SK-N-SH (cell line): ENCODE measurements at regions of chr9 and their contacts with region 1.

Region 1: GRCh38 chr9:127199001-127199791 is 65.4 kb upstream of the GARNL3 start:
- DNase-seq: peak; percentile 84
- H3K4me3 ChIP-seq: peak overlapping the region in 1 of 2 experiments; percentile 27; a peak in 1 of 4 replicates
- H3K27ac ChIP-seq: no peak overlapping the region
- H3K4me1 ChIP-seq: peaks cover 0 to 34% of the 10 kb centered on the region in 2 experiments; a peak in 2 of 4 replicates
- H3K27me3 ChIP-seq: no peaks in the 10 kb centered on the region
- CTCF ChIP-seq: peak; percentile 86
- EP300 ChIP-seq: no peak
- RAD21 ChIP-seq: peak; percentile 99

Region 2: GRCh38 chr9:126965541-126966428 is 233.4 kb before region 1 on chr9:
- CTCF ChIA-PET with region 1: interaction called, 118 read pairs
- POLR2A ChIA-PET with region 1: no interaction called
- DNase-seq: peak; percentile 73
- H3K4me3 ChIP-seq: no peak overlapping the region
- H3K27ac ChIP-seq: no peak overlapping the region
- H3K4me1 ChIP-seq: no peaks in the 10 kb centered on the region
- H3K27me3 ChIP-seq: no peaks in the 10 kb centered on the region
- CTCF ChIP-seq: peak; percentile 94
- EP300 ChIP-seq: no peak
- RAD21 ChIP-seq: peak; percentile 98

Region 3: DNA sequence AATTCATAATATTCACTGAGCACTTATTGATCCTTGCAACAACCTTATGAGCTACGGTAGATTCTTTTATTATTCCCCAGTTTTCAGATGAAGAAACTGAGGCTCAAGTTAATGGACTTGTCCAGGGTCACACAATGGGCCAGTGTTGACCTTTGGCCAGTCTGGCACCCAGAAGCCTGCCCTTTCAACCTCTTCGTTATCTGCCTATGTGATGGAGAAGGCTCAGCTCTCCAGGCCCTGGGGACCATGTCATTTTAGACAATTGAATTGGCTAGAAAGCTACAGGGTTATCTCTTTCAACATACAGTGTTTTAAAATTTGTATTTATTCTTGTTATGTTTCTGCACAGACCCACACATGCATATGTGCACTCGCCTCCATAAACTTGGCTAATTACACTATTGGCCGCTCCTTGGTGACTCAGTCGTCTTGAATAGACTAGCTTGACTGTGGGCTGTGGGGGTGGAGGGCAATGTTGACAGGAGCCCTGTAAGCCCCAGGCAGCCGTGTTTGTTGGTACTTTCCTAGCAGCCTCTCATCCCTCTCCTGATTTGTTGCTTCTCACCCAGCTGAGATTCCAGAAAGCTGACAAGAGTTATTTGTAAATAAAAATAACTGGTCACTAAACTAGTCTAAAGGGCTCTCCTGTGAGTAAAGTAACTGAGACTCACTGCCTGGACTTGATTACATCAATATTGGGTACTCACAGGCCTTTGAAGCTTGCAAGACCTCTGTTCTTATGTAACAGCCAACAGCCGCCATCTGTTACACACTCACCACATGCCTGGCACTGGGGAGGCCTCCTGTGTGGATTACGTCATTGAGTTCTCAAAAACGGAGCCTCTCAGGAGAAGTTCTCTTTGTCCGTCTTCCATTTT is 68.3 kb before region 1 on chr9:
- CTCF ChIA-PET with region 1: interaction called, 10 read pairs
- POLR2A ChIA-PET with region 1: no interaction called
- DNase-seq: peak; percentile 71
- H3K4me3 ChIP-seq: no peak overlapping the region
- H3K27ac ChIP-seq: peak overlapping the region in 1 of 2 experiments; percentile 58; a peak in 3 of 4 replicates
- H3K4me1 ChIP-seq: peaks cover 14 to 46% of the 10 kb centered on the region in 2 experiments; a peak in 3 of 4 replicates
- H3K27me3 ChIP-seq: no peaks in the 10 kb centered on the region
- CTCF ChIP-seq: no peak
- EP300 ChIP-seq: peak in 1 of 2 experiments; percentile 62; a peak in 1 of 4 replicates
- RAD21 ChIP-seq: no peak

Region 4: GRCh38 chr9:127178686-127179632 is 20.2 kb before region 1 on chr9:
- CTCF ChIA-PET with region 1: interaction called, 19 read pairs
- POLR2A ChIA-PET with region 1: no interaction called
- DNase-seq: no peak
- H3K4me3 ChIP-seq: no peak overlapping the region
- H3K27ac ChIP-seq: no peak overlapping the region
- H3K4me1 ChIP-seq: peaks cover 0 to 12% of the 10 kb centered on the region in 2 experiments; a peak in 1 of 4 replicates
- H3K27me3 ChIP-seq: no peaks in the 10 kb centered on the region
- CTCF ChIP-seq: no peak
- EP300 ChIP-seq: no peak
- RAD21 ChIP-seq: no peak

Region 5: DNA sequence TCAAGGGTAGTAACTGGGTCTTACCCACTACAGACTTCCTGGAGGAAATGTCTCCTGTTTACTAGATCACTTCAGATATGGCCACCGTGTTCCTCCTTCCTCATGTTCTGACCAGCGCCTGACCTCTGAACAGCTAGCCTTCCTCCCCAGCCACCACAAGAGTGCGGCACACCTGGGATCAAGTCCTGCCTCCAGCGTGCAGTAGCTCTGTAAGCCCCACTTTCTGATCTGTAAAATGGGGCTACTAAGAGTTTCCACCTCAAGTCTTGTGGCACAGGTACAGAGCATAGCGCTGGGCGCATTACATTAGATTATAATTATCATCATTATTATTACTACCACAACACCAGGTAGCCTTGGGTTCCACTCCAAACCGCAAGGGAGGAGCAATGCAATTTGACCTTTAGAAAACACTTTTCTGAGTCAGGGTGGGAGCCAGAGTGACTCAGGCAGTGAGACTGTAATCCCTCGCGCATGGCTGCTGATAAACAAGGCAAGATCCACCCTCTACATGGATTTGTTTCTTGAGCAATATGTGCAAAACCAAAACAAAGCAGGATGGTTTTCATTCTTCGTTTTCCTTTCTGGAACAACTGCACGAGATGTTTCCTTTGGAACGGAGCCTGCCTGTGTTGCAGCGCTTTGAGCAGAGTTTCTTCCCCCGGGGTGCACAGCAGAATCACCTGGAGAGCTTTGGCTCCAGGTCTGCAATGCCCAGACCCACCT is 11.8 kb before region 1 on chr9:
- CTCF ChIA-PET with region 1: interaction called, 23 read pairs
- POLR2A ChIA-PET with region 1: no interaction called
- DNase-seq: no peak
- H3K4me3 ChIP-seq: no peak overlapping the region
- H3K27ac ChIP-seq: peak overlapping the region; percentile 56 to 85; a peak in 2 of 4 replicates
- H3K4me1 ChIP-seq: peaks cover 21 to 22% of the 10 kb centered on the region in 2 experiments; a peak in 3 of 4 replicates
- H3K27me3 ChIP-seq: no peaks in the 10 kb centered on the region
- CTCF ChIP-seq: no peak
- EP300 ChIP-seq: no peak; a peak in 1 of 4 replicates
- RAD21 ChIP-seq: no peak

Region 6: GRCh38 chr9:127214421-127215267 is 15.4 kb after region 1 on chr9:
- CTCF ChIA-PET with region 1: interaction called, 20 read pairs
- POLR2A ChIA-PET with region 1: no interaction called
- DNase-seq: peak; percentile 82
- H3K4me3 ChIP-seq: no peak overlapping the region; a peak in 1 of 4 replicates
- H3K27ac ChIP-seq: no peak overlapping the region
- H3K4me1 ChIP-seq: peaks cover 0 to 5% of the 10 kb centered on the region in 2 experiments; a peak in 1 of 4 replicates
- H3K27me3 ChIP-seq: no peaks in the 10 kb centered on the region
- CTCF ChIP-seq: peak; percentile 85
- EP300 ChIP-seq: no peak
- RAD21 ChIP-seq: peak; percentile 83

Region 7: DNA sequence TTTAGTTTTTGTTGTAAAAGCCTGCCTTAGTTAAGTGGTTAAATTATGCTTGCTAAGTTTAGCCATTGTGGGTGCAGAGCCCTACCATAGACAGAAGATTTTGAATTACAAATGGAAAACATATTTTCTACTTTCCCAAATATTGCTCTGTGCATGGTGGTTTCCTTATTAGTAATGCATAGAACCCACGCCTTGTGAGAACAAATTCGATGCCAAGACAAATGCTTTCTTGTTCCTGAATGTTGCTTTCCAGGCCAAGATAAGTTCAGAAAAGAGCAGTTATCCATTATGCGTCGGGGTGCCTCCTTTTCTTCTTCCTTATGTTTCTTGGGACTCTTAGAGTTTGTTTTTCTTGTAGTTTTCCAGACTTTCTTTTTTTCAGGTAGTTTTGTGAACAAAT is 34.4 kb after region 1 on chr9:
- CTCF ChIA-PET with region 1: no interaction called
- POLR2A ChIA-PET with region 1: no interaction called
- DNase-seq: no peak
- H3K4me3 ChIP-seq: no peak overlapping the region
- H3K27ac ChIP-seq: peak overlapping the region; percentile 43 to 78; a peak in 3 of 4 replicates
- H3K4me1 ChIP-seq: peaks cover 7 to 13% of the 10 kb centered on the region in 2 experiments; a peak in 2 of 4 replicates
- H3K27me3 ChIP-seq: no peaks in the 10 kb centered on the region
- CTCF ChIP-seq: no peak
- EP300 ChIP-seq: no peak
- RAD21 ChIP-seq: no peak

Region 8: DNA sequence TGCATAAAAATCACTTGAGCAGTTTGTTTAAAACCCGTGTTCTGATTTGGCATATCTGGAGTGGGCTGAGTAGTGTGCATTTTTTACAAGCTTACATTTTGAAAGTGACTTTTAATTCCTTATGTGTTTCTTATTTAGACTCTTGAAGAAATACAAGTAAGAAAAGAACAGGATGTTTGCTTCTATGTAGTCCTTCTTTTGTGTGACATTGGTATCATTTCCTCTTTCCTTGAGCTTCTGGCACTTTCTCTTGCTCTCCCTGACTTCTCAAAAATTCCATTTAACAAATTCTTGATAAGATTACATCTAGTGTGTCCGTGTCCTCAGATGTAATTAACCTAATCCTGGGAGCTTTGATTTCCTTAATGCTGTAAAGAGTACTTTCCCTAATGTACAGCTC is 77.9 kb after region 1 on chr9:
- CTCF ChIA-PET with region 1: no interaction called
- POLR2A ChIA-PET with region 1: no interaction called
- DNase-seq: no peak
- H3K4me3 ChIP-seq: no peak overlapping the region
- H3K27ac ChIP-seq: no peak overlapping the region; a peak in 1 of 4 replicates
- H3K4me1 ChIP-seq: peaks cover 0 to 20% of the 10 kb centered on the region in 2 experiments; a peak in 2 of 4 replicates
- H3K27me3 ChIP-seq: no peaks in the 10 kb centered on the region
- CTCF ChIP-seq: no peak
- EP300 ChIP-seq: no peak
- RAD21 ChIP-seq: no peak